Body of pancreas (tissue), 4 donors: ENCODE measurements at regions of chr1 and their contacts with region 1.

Region 1: GRCh38 chr1:160951443-160952128 is 3.0 kb downstream of the ITLN2 start:
- DNase-seq: peak; percentile 73 to 82 (median 75)
- ATAC-seq: peak; percentile 87
- H3K4me3 ChIP-seq: no peak overlapping the region
- H3K27ac ChIP-seq: no peak overlapping the region
- H3K4me1 ChIP-seq: no peaks in the 10 kb centered on the region
- H3K27me3 ChIP-seq: no peaks in the 10 kb centered on the region
- CTCF ChIP-seq: peak; percentile 38 to 78 (median 71)
- POLR2A ChIP-seq: no peak

Region 2: GRCh38 chr1:160629286-160630210 is 322.0 kb before region 1 on chr1:
- intact Hi-C with region 1: no loop called
- DNase-seq: peak in 1 of 4 donors; percentile 62
- ATAC-seq: no peak
- H3K4me3 ChIP-seq: no peak overlapping the region
- H3K27ac ChIP-seq: peak overlapping the region in 1 of 4 donors; percentile 26
- H3K4me1 ChIP-seq: no peaks in the 10 kb centered on the region
- H3K27me3 ChIP-seq: no peaks in the 10 kb centered on the region
- CTCF ChIP-seq: no peak
- POLR2A ChIP-seq: no peak

Region 3: GRCh38 chr1:160726498-160727315 is 224.9 kb before region 1 on chr1:
- intact Hi-C with region 1: loop called (anchors 5 kb)
- DNase-seq: peak; percentile 50 to 70 (median 66)
- ATAC-seq: peak; percentile 81
- H3K4me3 ChIP-seq: no peak overlapping the region
- H3K27ac ChIP-seq: no peak overlapping the region
- H3K4me1 ChIP-seq: no peaks in the 10 kb centered on the region
- H3K27me3 ChIP-seq: no peaks in the 10 kb centered on the region
- CTCF ChIP-seq: peak; percentile 28 to 87 (median 84)
- POLR2A ChIP-seq: no peak

Region 4: GRCh38 chr1:160795951-160796383 is 155.6 kb before region 1 on chr1 and contains the start of gene LY9:
- intact Hi-C with region 1: no loop called
- DNase-seq: peak in 1 of 4 donors; percentile 55
- ATAC-seq: no peak
- H3K4me3 ChIP-seq: no peak within 1 kb of the TSS
- H3K27ac ChIP-seq: no peak within 1 kb of the TSS
- H3K4me1 ChIP-seq: no peaks in the 10 kb centered on the region
- H3K27me3 ChIP-seq: no peaks in the 10 kb centered on the region
- CTCF ChIP-seq: no peak
- POLR2A ChIP-seq: peak in 1 of 3 donors; percentile 12
- total RNA-seq, gene LY9: 0.33 to 1.6 TPM

Region 5: DNA sequence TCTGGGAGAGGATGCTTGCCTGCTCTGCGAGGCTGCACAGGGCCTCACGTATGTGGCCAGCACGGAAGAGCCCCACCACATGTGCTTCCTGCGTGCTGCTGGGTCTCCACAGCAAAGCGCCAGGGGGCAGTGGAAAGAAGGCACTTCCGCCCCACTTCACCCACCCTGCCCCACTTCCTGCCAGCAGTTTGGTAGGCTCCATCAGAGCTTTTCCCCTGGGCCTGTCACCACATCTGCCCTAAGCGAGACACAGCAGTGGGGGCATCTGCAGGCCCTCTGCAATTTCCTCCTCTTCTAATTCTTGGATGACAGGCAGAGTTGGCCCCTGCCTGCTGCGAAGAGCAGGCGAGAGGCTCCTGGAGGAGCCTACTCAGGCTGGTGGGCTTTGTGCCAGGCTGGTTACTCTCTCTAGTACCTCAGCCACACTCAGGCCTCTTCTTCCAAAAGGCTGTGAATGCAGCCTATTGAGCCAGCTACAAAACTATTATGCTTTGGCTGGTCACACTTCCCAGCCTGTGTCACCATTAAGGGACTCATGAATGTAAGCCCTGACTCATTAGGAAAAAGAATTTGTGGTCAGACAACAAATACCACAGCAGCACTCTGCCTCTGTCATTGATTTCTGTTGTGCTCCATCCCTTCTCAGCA is 113.9 kb before region 1 on chr1:
- intact Hi-C with region 1: loop called (anchors 5 kb)
- DNase-seq: peak in 2 of 4 donors; percentile 22 to 37
- ATAC-seq: no peak
- H3K4me3 ChIP-seq: no peak overlapping the region
- H3K27ac ChIP-seq: no peak overlapping the region
- H3K4me1 ChIP-seq: no peaks in the 10 kb centered on the region
- H3K27me3 ChIP-seq: no peaks in the 10 kb centered on the region
- CTCF ChIP-seq: no peak
- POLR2A ChIP-seq: no peak

Region 6: GRCh38 chr1:160901768-160902167 is 49.8 kb before region 1 on chr1:
- intact Hi-C with region 1: no loop called
- DNase-seq: no peak
- ATAC-seq: no peak
- H3K4me3 ChIP-seq: no peak overlapping the region
- H3K27ac ChIP-seq: no peak overlapping the region
- H3K4me1 ChIP-seq: peaks cover 17% of the 10 kb centered on the region
- H3K27me3 ChIP-seq: no peaks in the 10 kb centered on the region
- CTCF ChIP-seq: no peak
- POLR2A ChIP-seq: no peak

Region 7: GRCh38 chr1:161287482-161288054 is 336.0 kb after region 1 on chr1:
- intact Hi-C with region 1: no loop called
- DNase-seq: no peak
- ATAC-seq: no peak
- H3K4me3 ChIP-seq: no peak overlapping the region
- H3K27ac ChIP-seq: no peak overlapping the region
- H3K4me1 ChIP-seq: no peaks in the 10 kb centered on the region
- H3K27me3 ChIP-seq: no peaks in the 10 kb centered on the region
- CTCF ChIP-seq: no peak
- POLR2A ChIP-seq: no peak